Activated naive CD4-positive, alpha-beta T cell treated with anti-CD3 and anti-CD28 coated beads for 36 hours (primary cell): ENCODE measurements at regions of chr5 and their contacts with region 1.

Region 1: GRCh38 chr5:141557681-141558136 is 61.1 kb downstream of the DIAPH1 start:
- DNase-seq: peak; percentile 81
- H3K4me3 Mint-ChIP-seq: no peak overlapping the region
- H3K27ac Mint-ChIP-seq: peak overlapping the region; percentile 16
- H3K4me1 Mint-ChIP-seq: peaks cover 22% of the 10 kb centered on the region
- H3K27me3 Mint-ChIP-seq: no peaks in the 10 kb centered on the region

Region 2: GRCh38 chr5:141223112-141223783 is 334.5 kb before region 1 on chr5 and contains the start of gene PCDHB14:
- CTCF ChIA-PET with region 1: no interaction called
- intact Hi-C with region 1: loop called (anchors 10 kb)
- DNase-seq: no peak
- H3K4me3 Mint-ChIP-seq: no peak within 1 kb of the TSS
- H3K27ac Mint-ChIP-seq: no peak within 1 kb of the TSS
- H3K4me1 Mint-ChIP-seq: peaks cover 4% of the 10 kb centered on the region
- H3K27me3 Mint-ChIP-seq: peaks cover 56% of the 10 kb centered on the region
- total RNA-seq, gene PCDHB14: not detected

Region 3: GRCh38 chr5:141412854-141413539 is 144.7 kb before region 1 on chr5 and contains the start of gene PCDHGA10:
- CTCF ChIA-PET with region 1: interaction called, 18 read pairs
- intact Hi-C with region 1: loop called (anchors 1 kb)
- DNase-seq: peak; percentile 73
- H3K4me3 Mint-ChIP-seq: peak within 1 kb of the TSS; percentile 78
- H3K27ac Mint-ChIP-seq: no peak within 1 kb of the TSS
- H3K4me1 Mint-ChIP-seq: peaks cover 16% of the 10 kb centered on the region
- H3K27me3 Mint-ChIP-seq: peaks cover 69% of the 10 kb centered on the region
- total RNA-seq, gene PCDHGA10: 0.05 TPM in 1 of 2 experiments, not detected in the other

Region 4: DNA sequence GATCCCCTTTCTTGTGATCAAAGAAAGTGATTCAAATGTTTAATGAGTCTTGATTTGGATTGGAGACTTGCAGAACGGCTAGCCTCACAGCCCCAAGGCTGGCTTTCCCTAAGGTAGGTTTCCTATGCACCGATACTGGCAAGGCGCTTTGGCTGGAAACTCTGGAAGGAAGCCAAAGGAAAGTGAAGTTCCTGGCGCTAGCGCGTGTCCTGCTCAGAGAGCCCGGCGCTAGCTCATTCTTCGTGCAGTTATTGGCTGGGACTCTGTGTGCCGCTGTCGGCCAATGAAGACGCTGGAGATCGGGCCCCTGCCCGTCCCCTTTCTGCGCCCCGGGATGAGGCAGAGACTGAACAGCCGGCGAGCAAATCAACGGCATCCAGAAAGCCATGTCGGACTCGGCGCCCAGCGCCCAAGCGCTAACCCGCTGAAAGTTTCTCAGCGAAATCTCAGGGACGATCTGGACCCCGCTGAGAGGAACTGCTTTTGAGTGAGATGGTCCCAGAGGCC is 82.0 kb before region 1 on chr5 and contains the start of gene PCDHGC3:
- CTCF ChIA-PET with region 1: interaction called, 8 read pairs
- intact Hi-C with region 1: loop called (anchors 2 kb)
- DNase-seq: peak; percentile 72
- H3K4me3 Mint-ChIP-seq: peak within 1 kb of the TSS; percentile 86
- H3K27ac Mint-ChIP-seq: no peak within 1 kb of the TSS
- H3K4me1 Mint-ChIP-seq: peaks cover 20% of the 10 kb centered on the region
- H3K27me3 Mint-ChIP-seq: peaks cover 50% of the 10 kb centered on the region
- total RNA-seq, gene PCDHGC3: 0.12 to 0.17 TPM

Region 5: GRCh38 chr5:141504216-141504615 is 53.5 kb before region 1 on chr5:
- CTCF ChIA-PET with region 1: no interaction called
- intact Hi-C with region 1: no loop called
- DNase-seq: no peak
- H3K4me3 Mint-ChIP-seq: no peak overlapping the region
- H3K27ac Mint-ChIP-seq: no peak overlapping the region
- H3K4me1 Mint-ChIP-seq: peaks cover 3% of the 10 kb centered on the region
- H3K27me3 Mint-ChIP-seq: peaks cover 2% of the 10 kb centered on the region

Region 6: GRCh38 chr5:141524604-141525597 is 32.8 kb before region 1 on chr5:
- CTCF ChIA-PET with region 1: interaction called, 33 read pairs
- intact Hi-C with region 1: no loop called
- DNase-seq: peak; percentile 57
- H3K4me3 Mint-ChIP-seq: no peak overlapping the region
- H3K27ac Mint-ChIP-seq: no peak overlapping the region
- H3K4me1 Mint-ChIP-seq: peaks cover 32% of the 10 kb centered on the region
- H3K27me3 Mint-ChIP-seq: no peaks in the 10 kb centered on the region

Region 7: DNA sequence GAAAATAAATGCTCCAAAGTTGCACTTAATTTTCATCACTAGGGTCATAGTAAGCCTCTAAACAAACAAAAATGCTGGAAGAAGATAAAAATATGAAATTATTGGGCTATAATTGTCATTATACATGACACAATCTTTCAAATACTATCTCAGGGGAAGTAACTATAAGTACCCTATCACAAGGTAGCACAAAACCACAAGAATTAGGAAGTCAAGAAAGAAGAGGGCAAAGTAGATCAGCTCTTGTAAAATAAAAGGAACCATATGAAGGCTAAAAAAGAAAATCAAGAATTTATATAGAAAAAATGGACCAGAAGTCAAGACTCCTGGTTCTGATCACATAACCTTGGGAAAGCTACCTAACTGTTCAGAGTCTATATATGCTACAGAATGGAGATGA is 12.9 kb after region 1 on chr5:
- CTCF ChIA-PET with region 1: interaction called, 36 read pairs
- intact Hi-C with region 1: no loop called
- DNase-seq: no peak
- H3K4me3 Mint-ChIP-seq: no peak overlapping the region
- H3K27ac Mint-ChIP-seq: no peak overlapping the region
- H3K4me1 Mint-ChIP-seq: no peaks in the 10 kb centered on the region
- H3K27me3 Mint-ChIP-seq: no peaks in the 10 kb centered on the region